ENCODE measurements at regions of chr17 and their contacts with region 1.

Region 1: DNA sequence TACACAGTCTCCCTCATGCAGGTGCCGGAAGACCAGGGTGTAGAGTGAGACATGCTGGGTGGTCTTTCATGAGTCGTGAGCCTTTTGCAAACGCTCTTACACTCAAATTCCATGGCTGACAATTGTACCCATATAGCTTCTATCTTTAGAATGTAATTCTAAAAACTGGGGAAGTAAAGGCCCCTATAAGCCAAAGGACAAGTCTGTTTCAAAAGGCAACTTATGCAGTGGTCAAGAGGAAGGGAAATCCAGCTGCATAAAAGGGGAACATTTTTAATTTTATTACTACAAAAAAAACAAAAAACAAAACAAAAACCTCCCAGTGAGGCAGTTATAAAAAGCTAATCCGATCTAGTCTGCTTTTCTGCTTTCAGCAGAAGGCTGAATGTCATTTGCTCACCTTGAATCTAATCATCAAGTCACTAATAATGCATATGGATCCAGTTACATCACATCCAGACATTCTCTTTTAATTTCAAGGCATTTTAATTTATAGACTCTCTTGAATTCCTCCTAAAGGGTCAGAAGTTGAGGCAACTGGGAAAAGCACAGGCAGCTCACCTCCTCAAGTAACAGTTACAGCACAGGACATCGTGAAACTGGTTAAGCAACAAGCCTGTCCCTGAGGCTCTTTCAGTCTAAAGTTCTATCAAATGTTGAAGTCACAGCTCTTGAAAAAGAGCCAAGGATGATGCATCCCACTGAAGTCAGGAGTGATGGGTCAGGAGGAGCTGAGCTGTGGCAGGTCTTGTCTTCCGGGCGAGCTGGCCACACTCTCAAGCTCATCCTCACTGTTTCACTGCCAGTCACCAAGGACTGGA is 99.8 kb downstream of the VPS53 start:
- DNase-seq: peak; percentile 78 to 92 (median 87)
- H3K4me3 ChIP-seq: peak overlapping the region in 2 of 3 experiments; percentile 17 to 66
- H3K4me3 Mint-ChIP-seq: peak overlapping the region; percentile 62 to 67
- H3K27ac ChIP-seq: peak overlapping the region; percentile 87 to 94
- H3K27ac Mint-ChIP-seq: peak overlapping the region; percentile 96 to 100 (median 97)
- H3K4me1 ChIP-seq: peaks cover 48 to 60% of the 10 kb centered on the region in 2 donors
- H3K4me1 Mint-ChIP-seq: peaks cover 47% of the 10 kb centered on the region
- H3K27me3 ChIP-seq: no peaks in the 10 kb centered on the region
- H3K27me3 Mint-ChIP-seq: peaks cover 0 to 1% (median 0%) of the 10 kb centered on the region in 3 donors
- CTCF ChIP-seq: no peak

Region 2: GRCh38 chr17:628089-628941 is 13.5 kb after region 1 on chr17:
- intact Hi-C with region 1: loop called in 1 of 2 experiments (anchors 2 kb)
- DNase-seq: peak in 2 of 3 donors; percentile 39 to 64
- H3K4me3 ChIP-seq: peak overlapping the region; percentile 18 to 61 (median 49)
- H3K4me3 Mint-ChIP-seq: peak overlapping the region; percentile 73 to 95
- H3K27ac ChIP-seq: peak overlapping the region; percentile 78 to 85
- H3K27ac Mint-ChIP-seq: peak overlapping the region; percentile 94 to 99 (median 97)
- H3K4me1 ChIP-seq: peaks cover 62 to 63% of the 10 kb centered on the region in 2 donors
- H3K4me1 Mint-ChIP-seq: peaks cover 69% of the 10 kb centered on the region
- H3K27me3 ChIP-seq: no peaks in the 10 kb centered on the region
- H3K27me3 Mint-ChIP-seq: peaks cover 0 to 2% (median 0%) of the 10 kb centered on the region in 3 donors
- CTCF ChIP-seq: no peak

Region 3: GRCh38 chr17:688100-688989 is 73.5 kb after region 1 on chr17:
- intact Hi-C with region 1: loop called in 1 of 2 experiments (anchors 5 kb)
- DNase-seq: peak; percentile 56 to 77 (median 59)
- H3K4me3 ChIP-seq: no peak overlapping the region
- H3K4me3 Mint-ChIP-seq: no peak overlapping the region
- H3K27ac ChIP-seq: peak overlapping the region in 1 of 2 donors; percentile 87
- H3K27ac Mint-ChIP-seq: peak overlapping the region in 6 of 7 donors; percentile 33 to 97 (median 56)
- H3K4me1 ChIP-seq: peaks cover 17 to 30% of the 10 kb centered on the region in 2 donors
- H3K4me1 Mint-ChIP-seq: peaks cover 30% of the 10 kb centered on the region
- H3K27me3 ChIP-seq: no peaks in the 10 kb centered on the region
- H3K27me3 Mint-ChIP-seq: no peaks in the 10 kb centered on the region
- CTCF ChIP-seq: peak; percentile 69

Measured in CD14-positive monocyte (primary cell).